ENCODE measurements at regions of chr3 and their contacts with region 1.

Region 1: GRCh38 chr3:115217678-115218451 is 70.8 kb upstream of the ZBTB20 start:
- DNase-seq: peak; percentile 42
- ATAC-seq: peak; percentile 91
- H3K4me3 ChIP-seq: no peak overlapping the region
- H3K27ac ChIP-seq: no peak overlapping the region
- H3K4me1 ChIP-seq: peaks cover 0 to 11% of the 10 kb centered on the region in 2 experiments; a peak in 2 of 4 replicates
- H3K27me3 ChIP-seq: no peaks in the 10 kb centered on the region
- CTCF ChIP-seq: peak; percentile 59 to 87 (median 85)
- POLR2A ChIP-seq: no peak
- RAD21 ChIP-seq: peak; percentile 92

Region 2: DNA sequence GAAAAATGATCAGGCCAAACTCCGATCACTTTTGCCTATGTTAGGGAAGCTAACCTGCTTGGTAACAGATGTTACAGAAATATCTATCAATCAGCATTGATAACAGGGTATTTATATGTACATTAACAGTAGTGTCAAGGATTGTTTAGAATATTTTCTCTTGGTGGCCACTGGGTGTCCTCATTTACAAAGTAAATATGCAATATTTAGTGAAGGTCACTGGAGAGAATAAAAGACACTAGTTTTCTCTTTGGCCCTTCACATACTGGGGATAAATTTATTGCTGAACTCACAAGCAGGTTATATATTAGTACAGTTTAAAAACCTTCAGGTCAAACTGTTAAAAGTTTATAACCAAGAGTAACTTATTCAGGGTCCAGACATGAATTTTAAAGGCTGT is 855.0 kb before region 1 on chr3:
- CTCF ChIA-PET with region 1: no interaction called
- POLR2A ChIA-PET with region 1: no interaction called
- RAD21 ChIA-PET with region 1: no interaction called
- intact Hi-C with region 1: loop called (anchors 10 kb)
- DNase-seq: peak; percentile 33
- ATAC-seq: peak; percentile 80
- H3K4me3 ChIP-seq: no peak overlapping the region
- H3K27ac ChIP-seq: peak overlapping the region; percentile 41; the same call in 1 of the 2 replicates
- H3K4me1 ChIP-seq: peaks cover 20 to 28% of the 10 kb centered on the region in 2 experiments
- H3K27me3 ChIP-seq: no peaks in the 10 kb centered on the region
- CTCF ChIP-seq: peak; percentile 41 to 59 (median 43); a peak in 5 of 6 replicates
- POLR2A ChIP-seq: no peak
- RAD21 ChIP-seq: peak; percentile 72

Region 3: DNA sequence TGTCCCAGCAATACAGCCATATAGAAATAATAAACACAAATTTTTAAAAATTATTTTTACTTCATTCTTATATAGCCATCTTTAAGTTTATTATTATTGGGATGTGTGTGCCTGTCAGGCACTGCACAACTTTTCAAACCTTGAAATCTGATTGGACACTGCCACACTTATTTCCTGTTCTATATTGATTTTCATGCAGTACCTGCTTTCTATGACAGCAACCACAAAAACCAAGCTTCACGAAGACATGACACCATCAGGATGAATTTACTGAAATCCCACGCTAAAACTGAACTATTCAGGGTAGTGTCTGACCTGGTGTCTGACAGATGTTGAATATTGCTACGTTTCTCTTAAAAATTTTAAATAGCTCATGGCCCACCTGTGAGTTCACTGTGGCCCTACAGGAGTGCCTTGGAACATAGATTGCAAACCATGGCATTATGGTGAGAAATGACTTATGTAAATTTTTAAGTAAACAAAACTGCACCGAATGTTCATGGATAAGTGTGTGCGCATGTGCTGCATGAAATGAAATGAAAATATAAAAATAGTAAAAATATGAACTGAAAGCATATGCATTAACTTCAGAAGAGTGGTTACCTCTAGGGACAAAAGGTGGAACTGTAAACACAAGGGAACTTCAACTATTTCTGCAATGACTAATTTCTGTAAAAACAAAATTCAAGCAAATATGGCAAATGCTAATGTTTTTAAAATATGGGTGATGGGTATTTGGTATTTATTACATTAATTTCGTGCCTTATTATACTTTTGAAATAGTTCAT is 223.1 kb before region 1 on chr3:
- CTCF ChIA-PET with region 1: no interaction called
- POLR2A ChIA-PET with region 1: no interaction called
- RAD21 ChIA-PET with region 1: no interaction called
- intact Hi-C with region 1: no loop called
- DNase-seq: no peak
- ATAC-seq: no peak
- H3K4me3 ChIP-seq: no peak overlapping the region
- H3K27ac ChIP-seq: no peak overlapping the region
- H3K4me1 ChIP-seq: no peaks in the 10 kb centered on the region
- H3K27me3 ChIP-seq: no peaks in the 10 kb centered on the region
- CTCF ChIP-seq: no peak
- POLR2A ChIP-seq: no peak
- RAD21 ChIP-seq: no peak

Region 4: DNA sequence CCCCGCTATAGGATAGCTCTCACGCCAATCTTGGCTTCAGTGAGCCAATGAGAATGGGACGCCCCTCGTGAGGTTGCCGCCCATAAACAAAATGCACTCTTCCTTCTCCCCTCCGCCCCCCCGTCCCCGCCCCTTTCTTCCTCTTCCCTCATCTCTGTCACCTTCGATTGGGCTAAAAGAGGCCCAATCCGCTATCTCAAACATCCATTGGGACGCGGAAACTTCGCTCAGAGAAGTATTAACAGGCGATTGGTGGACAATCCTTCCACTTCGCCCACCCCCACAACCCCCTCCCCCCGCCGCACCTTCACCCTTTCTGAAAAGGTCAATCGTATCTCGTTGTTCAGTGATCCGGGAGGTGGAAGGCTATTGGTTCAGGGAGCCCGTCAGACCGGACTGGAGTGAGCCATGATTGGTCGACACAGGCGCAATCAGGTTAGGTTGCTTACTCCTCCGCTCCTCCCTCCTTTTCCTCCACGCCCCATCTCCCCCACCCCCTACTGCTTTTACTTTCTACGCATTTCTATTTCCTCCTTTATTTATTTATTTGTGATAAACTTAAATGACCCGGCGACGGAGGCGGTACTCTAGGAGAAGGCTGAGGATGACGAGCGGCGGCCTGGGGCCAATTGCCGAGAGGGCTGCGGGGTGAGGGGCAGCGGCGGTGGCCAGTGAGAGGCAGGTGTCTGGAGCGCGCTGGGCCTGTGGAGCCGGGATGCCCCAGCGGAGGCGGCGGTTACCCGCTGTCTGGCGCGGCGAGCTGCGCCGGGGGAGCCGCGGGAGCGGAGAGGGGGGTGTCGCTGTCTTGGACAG is 70.3 kb before region 1 on chr3:
- CTCF ChIA-PET with region 1: no interaction called
- POLR2A ChIA-PET with region 1: no interaction called
- RAD21 ChIA-PET with region 1: no interaction called
- intact Hi-C with region 1: no loop called
- DNase-seq: peak; percentile 99
- ATAC-seq: peak; percentile 84
- H3K4me3 ChIP-seq: peak overlapping the region; percentile 75 to 79
- H3K27ac ChIP-seq: peak overlapping the region; percentile 71
- H3K4me1 ChIP-seq: peaks cover 9 to 17% of the 10 kb centered on the region in 2 experiments; a peak in 3 of 4 replicates
- H3K27me3 ChIP-seq: no peaks in the 10 kb centered on the region
- CTCF ChIP-seq: no peak
- POLR2A ChIP-seq: peak; percentile 56
- RAD21 ChIP-seq: no peak

Region 5: DNA sequence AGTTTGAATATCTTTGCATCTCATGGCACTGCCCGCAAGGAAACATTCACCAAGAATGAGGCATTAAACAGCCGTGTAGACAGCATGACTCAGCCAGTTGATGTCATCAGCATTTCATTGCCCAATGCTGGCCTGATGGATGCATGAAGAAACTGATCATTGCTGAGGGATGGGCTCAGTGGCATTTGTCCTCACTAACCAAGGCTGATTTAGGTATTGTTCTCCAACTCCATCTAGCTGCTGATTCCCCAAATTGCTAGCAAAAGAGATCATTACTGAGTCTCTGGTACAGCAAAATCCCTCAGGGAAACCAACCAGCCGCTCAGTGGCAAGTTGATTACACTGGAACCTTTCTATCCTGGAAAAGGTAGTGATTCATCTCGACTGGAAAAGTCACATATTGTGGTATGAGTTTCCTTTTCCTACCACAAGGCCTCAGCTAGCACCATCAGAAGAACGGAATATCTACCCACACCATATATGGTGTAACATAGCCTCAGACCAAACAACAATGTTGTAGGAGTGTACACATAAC is 219.0 kb after region 1 on chr3:
- CTCF ChIA-PET with region 1: no interaction called
- POLR2A ChIA-PET with region 1: no interaction called
- RAD21 ChIA-PET with region 1: no interaction called
- intact Hi-C with region 1: loop called (anchors 5 kb)
- DNase-seq: peak; percentile 24
- ATAC-seq: peak; percentile 38
- H3K4me3 ChIP-seq: no peak overlapping the region
- H3K27ac ChIP-seq: no peak overlapping the region
- H3K4me1 ChIP-seq: peaks cover 0 to 6% of the 10 kb centered on the region in 2 experiments; a peak in 1 of 4 replicates
- H3K27me3 ChIP-seq: no peaks in the 10 kb centered on the region
- CTCF ChIP-seq: peak in 1 of 3 experiments; percentile 21; a peak in 1 of 6 replicates
- POLR2A ChIP-seq: no peak
- RAD21 ChIP-seq: peak; percentile 58

Region 6: DNA sequence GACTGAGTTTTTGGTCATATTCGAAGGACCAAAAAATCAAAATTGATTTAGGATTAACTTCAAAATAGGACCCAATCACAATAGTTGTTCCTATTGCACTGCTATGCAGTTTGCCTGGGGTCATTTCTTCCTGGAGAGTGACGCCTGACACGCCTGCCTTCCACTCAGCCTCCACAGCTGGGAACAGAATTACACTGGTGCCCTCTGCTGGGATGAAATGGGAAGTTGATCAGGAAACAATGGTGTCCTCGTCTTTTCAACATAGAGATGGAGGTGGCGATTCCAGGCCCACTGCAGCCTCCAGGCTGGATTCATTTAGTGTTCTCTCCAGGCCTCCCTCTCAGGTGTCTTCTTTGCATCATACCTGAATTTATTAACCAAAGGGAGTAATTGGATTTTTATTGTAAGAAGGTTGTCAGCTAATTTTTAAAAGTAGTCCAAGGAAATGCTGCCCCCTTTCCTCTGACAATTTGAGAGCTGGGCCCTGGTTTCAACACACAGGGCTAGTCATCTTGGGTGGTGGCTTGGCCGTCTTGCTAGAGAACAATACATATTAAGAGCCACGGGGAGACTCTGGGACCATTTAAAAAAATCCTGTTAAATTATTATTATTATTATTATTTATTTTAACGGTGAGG is 475.1 kb after region 1 on chr3:
- CTCF ChIA-PET with region 1: interaction called, 43 read pairs
- POLR2A ChIA-PET with region 1: no interaction called
- RAD21 ChIA-PET with region 1: interaction called, 4 to 5 read pairs
- intact Hi-C with region 1: loop called (anchors 1 kb)
- DNase-seq: peak; percentile 68
- ATAC-seq: peak; percentile 96
- H3K4me3 ChIP-seq: no peak overlapping the region
- H3K27ac ChIP-seq: no peak overlapping the region
- H3K4me1 ChIP-seq: peaks cover 0 to 11% of the 10 kb centered on the region in 2 experiments; a peak in 2 of 4 replicates
- H3K27me3 ChIP-seq: no peaks in the 10 kb centered on the region
- CTCF ChIP-seq: peak; percentile 74 to 95 (median 86)
- POLR2A ChIP-seq: no peak
- RAD21 ChIP-seq: peak; percentile 96

Region 7: DNA sequence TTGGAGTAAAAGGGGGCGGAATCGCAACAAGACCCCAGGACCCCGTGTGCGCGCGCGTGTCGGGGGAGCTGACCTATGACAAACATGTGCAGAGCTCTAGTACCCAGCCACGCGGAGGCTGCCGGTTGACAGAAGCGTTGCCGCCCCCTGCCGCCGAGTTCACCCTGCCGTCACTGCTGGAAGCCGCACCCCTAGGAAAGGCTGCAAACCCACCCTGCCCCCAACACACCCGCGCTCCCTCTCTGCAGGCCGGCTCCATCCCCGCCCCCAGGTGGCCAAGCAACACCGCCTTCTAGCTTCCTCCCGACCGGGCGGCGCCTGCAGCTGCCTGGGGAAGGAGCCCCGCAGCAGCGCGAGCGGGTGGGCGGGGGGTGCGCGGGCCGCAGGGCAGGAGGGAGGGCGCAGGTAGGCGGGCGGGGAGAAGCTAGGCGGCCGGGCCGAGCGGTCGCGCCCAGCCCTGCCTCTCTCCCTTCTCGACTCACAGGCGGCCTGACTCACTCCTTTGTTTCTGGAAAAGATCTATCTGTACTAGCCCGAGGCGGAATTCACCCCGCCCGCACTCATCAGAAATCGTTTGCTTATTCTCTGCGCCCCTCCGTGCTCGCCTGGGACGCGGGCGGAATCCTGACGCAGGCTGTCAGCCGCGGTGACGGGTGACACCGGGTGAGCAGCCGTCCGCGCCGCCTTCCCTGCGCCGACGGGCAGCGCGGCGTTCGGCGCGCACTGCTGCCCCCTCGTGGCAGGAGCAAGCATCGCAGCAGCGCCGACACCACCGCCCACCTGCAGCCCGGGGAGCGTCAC is 566.3 kb after region 1 on chr3:
- CTCF ChIA-PET with region 1: interaction called, 15 read pairs
- POLR2A ChIA-PET with region 1: no interaction called
- RAD21 ChIA-PET with region 1: no interaction called
- intact Hi-C with region 1: loop called (anchors 1 kb)
- DNase-seq: peak; percentile 83
- ATAC-seq: peak; percentile 85
- H3K4me3 ChIP-seq: peak overlapping the region; percentile 44 to 61
- H3K27ac ChIP-seq: peak overlapping the region; percentile 56
- H3K4me1 ChIP-seq: peaks cover 13 to 32% of the 10 kb centered on the region in 2 experiments
- H3K27me3 ChIP-seq: no peaks in the 10 kb centered on the region
- CTCF ChIP-seq: peak; percentile 71 to 97 (median 94)
- POLR2A ChIP-seq: no peak
- RAD21 ChIP-seq: peak; percentile 81

Region 8: GRCh38 chr3:115814778-115815380 is 597.0 kb after region 1 on chr3:
- CTCF ChIA-PET with region 1: interaction called, 7 read pairs
- POLR2A ChIA-PET with region 1: no interaction called
- RAD21 ChIA-PET with region 1: interaction called in 1 of 2 experiments, 4 read pairs
- intact Hi-C with region 1: loop called (anchors 1 kb)
- DNase-seq: peak; percentile 59
- ATAC-seq: peak; percentile 93
- H3K4me3 ChIP-seq: no peak overlapping the region
- H3K27ac ChIP-seq: no peak overlapping the region
- H3K4me1 ChIP-seq: no peaks in the 10 kb centered on the region
- H3K27me3 ChIP-seq: no peaks in the 10 kb centered on the region
- CTCF ChIP-seq: peak; percentile 71 to 94 (median 81); a peak in 5 of 6 replicates
- POLR2A ChIP-seq: no peak
- RAD21 ChIP-seq: peak; percentile 94